Heart right ventricle (tissue), 16 donors: ENCODE measurements at regions of chr6 and their contacts with region 1.

Region 1: DNA sequence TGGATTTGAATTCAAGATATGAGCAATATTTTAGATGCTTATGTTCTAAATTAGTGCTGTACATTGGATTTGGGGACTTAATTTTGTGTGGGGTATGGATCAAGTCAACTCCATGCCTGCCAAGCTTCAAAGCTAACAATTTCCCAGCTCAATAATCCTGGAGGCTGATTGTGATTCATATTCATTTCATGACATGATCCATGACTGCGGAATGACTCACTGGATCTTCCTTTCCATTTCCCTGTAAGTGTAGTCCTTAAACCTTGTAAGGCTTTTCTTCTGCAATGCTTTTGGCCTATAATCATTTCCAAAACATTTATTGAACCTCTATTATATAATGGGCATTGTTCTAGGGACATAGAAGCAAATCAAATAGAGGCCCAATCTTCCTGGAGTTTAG is 44.7 kb upstream of the CCN2 start:
- DNase-seq: no peak
- ATAC-seq: no peak
- H3K4me3 ChIP-seq: no peak overlapping the region
- H3K27ac ChIP-seq: no peak overlapping the region
- H3K4me1 ChIP-seq: peaks cover 0 to 27% (median 12%) of the 10 kb centered on the region in 9 donors
- H3K27me3 ChIP-seq: no peaks in the 10 kb centered on the region
- CTCF ChIP-seq: no peak

Region 2: DNA sequence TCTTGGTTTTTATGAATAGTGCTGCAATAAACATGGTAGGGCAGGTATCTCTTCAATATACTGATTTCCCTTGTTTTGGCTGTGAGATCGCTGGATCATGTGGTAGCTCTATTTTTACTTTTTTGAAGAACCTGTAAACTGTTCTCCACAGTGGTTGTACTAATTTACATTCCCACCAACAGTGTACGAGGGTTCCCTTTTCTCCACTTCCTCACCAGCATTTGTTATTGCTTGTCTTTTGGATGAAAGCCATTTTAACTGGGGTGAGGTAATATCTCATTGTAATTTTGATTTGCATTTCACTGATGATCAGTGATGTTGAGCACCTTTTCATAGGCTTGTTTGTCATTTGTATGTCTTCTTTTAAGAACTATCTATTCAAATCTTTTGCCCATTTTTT is 430.9 kb before region 1 on chr6:
- intact Hi-C with region 1: no loop called
- DNase-seq: no peak
- ATAC-seq: no peak
- H3K4me3 ChIP-seq: no peak overlapping the region
- H3K27ac ChIP-seq: no peak overlapping the region
- H3K4me1 ChIP-seq: no peaks in the 10 kb centered on the region
- H3K27me3 ChIP-seq: no peaks in the 10 kb centered on the region
- CTCF ChIP-seq: no peak

Region 3: DNA sequence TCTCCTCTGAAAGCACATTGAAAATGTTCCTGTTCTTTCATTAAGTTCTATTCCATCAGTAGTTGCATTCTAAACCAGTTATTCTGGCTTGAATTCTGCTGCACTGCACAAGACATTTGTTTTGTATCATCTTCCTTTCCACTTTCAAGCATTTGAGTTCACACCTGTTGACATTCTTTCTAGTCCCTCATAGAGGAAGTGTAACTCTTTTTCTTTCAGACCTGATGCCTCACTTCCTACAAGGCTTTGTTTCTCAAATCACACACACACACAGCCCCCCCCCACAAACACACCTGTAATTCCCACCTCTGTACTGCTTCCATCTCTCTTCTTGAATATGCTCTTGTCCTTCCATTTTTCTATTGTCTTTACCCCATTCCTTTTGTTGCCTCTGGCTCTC is 95.7 kb before region 1 on chr6:
- intact Hi-C with region 1: no loop called
- DNase-seq: no peak
- ATAC-seq: no peak
- H3K4me3 ChIP-seq: no peak overlapping the region
- H3K27ac ChIP-seq: no peak overlapping the region
- H3K4me1 ChIP-seq: no peaks in the 10 kb centered on the region
- H3K27me3 ChIP-seq: no peaks in the 10 kb centered on the region
- CTCF ChIP-seq: no peak

Region 4: GRCh38 chr6:131960371-131961133 is 35.4 kb before region 1 on chr6:
- intact Hi-C with region 1: loop called in 1 of 10 experiments (anchors 5 kb)
- DNase-seq: no peak
- ATAC-seq: peak in 1 of 8 donors; percentile 34
- H3K4me3 ChIP-seq: no peak overlapping the region
- H3K27ac ChIP-seq: no peak overlapping the region
- H3K4me1 ChIP-seq: peaks cover 0 to 6% (median 0%) of the 10 kb centered on the region in 9 donors
- H3K27me3 ChIP-seq: no peaks in the 10 kb centered on the region
- CTCF ChIP-seq: peak in 4 of 9 donors; percentile 44 to 56 (median 48)